HepG2 (cell line): ENCODE measurements at regions of chr2 and their contacts with region 1.

Region 1: DNA sequence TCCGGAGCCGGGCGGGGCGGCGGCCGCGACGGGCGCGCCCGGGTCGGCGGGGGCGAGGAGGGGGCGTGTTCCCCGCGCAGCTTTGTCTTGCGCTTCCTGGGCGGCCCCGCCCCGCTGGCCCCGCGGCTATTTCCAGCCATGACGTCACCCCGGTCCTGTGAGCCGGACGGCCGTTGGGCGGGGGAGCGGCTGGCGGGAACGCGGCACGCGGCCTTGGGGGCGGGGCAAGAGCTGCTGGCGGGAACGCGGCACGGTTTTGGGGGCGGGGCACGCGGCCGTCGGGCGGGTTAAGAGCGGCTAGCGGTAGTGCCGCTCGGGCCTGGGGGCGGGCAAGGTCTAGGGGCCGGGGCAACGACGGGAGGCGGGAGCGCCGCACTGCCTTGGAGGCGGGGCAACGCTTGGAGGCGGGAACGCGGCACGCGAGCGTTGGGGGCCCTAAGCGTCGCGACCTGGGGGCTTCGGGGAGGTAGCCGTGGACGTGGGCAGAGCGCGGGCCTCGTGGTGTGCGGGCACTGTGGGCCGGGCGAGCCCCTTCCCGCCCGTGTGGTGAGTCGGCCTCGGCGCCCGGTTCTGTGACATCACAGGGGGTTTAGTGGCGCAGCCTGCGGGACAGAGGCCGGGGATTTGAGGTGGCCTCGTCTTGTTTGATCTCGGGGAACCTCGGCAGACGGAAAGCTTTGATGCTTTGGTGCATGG is 704 bp downstream of the KLF11 start:
- DNase-seq: peak; percentile 64
- ATAC-seq: peak; percentile 10
- H3K4me3 ChIP-seq: peak overlapping the region in 2 of 3 experiments; percentile 48 to 63; a peak in 4 of 6 replicates
- H3K27ac ChIP-seq: no peak overlapping the region
- H3K4me1 ChIP-seq: peaks cover 52% of the 10 kb centered on the region
- H3K27me3 ChIP-seq: peaks cover 5 to 27% of the 10 kb centered on the region in 2 experiments; a peak in 4 of 5 replicates
- CTCF ChIP-seq: no peak
- EP300 ChIP-seq: no peak; a peak in 1 of 4 replicates
- POLR2A ChIP-seq: no peak
- RAD21 ChIP-seq: peak; percentile 1; the same call in 1 of the 2 replicates

Region 2: DNA sequence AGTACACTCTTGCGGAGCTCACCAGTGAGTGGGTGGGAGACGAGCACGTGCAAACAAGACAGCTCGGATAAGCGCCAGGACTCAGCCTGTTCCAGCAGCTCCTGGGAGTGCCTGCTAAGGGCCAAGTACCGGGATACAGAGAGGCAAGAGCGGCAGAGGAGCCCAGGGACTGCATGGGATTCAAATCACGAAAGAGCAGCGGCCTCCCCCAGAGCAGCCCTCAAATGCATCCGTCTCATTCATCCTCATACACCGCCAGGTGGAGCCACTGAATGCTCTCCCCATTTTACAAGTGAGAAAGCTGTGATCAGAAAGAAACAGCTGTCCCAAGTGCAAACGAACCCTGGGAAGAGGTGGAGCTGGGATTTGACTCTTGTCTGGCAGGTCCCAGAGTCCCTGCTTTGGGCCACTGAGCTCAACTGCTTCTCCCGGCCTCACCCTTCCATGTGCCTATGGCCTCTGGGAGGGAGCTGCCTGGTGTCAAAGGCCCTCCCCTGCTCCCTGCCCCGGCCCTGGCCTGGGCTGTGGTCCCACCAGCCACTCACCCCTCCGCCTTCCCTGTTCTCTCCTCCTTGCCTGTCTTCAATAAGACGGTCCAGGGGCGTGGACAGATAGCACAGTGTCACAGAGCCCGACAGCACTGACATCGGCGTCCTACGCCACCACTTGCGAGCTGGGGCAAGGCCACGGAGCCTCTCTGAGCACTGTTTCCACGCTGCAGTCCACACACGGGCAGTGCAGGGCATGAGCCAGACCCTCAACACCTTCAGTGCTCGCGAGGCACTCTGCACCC is 273.6 kb before region 1 on chr2:
- CTCF ChIA-PET with region 1: interaction called, 3 read pairs
- POLR2A ChIA-PET with region 1: interaction called, 3 read pairs
- in situ Hi-C with region 1: no loop called
- intact Hi-C with region 1: loop called (anchors 1 kb)
- DNase-seq: peak; percentile 76
- ATAC-seq: peak; percentile 63
- H3K4me3 ChIP-seq: peak overlapping the region in 1 of 3 experiments; percentile 20; a peak in 1 of 6 replicates
- H3K27ac ChIP-seq: no peak overlapping the region
- H3K4me1 ChIP-seq: peaks cover 70% of the 10 kb centered on the region
- H3K27me3 ChIP-seq: peaks cover 9 to 71% of the 10 kb centered on the region in 2 experiments
- CTCF ChIP-seq: peak; percentile 82
- EP300 ChIP-seq: no peak
- POLR2A ChIP-seq: no peak
- RAD21 ChIP-seq: no peak; the same call in 1 of the 2 replicates

Region 3: DNA sequence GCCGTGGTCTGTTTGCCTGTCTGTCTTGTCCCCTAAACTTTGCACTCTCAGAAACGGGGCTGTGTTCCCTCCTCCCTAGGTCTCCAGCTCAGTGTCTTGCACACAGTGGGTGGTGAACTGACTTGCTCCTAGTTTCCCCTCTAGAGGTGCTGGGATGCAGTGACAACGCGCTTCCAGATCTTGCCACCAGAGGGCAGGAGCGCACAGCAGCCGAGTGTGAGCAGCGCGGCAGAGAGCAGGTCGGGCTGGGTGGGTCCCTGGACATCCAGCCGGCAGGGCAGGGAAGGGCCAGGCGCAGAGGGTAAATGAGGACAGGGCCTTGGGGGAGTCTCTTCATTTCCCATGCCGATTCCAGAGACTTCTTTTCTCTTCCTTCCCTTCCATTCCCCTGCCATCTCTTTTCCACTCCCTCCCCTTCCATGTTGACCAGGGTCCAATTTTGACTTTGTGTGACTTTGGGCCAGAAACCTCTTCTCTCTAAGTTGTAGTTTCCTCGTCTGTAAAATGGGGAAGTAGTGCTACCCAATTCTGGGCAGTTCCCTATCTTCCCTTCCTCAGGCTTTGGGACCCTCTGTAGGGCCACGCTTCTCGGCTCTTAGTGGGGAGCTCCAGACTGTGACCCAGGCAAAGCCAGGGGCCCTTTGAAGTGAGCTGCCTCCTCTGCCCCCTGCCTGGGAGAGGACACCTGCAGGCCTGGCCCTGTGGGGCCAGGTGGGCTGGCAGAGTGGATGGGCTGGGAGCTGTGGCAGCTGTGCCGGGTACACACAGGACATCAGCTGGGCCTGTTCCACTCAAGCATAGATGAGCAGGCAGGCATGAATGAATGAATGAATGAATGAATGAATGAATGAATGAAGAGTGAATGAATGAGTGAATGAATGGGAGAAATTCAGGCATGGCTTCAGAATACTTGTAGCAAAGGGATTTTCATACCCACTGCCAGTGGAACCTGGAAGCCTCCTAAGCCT is 244.1 kb before region 1 on chr2:
- CTCF ChIA-PET with region 1: interaction called, 14 read pairs
- POLR2A ChIA-PET with region 1: no interaction called
- in situ Hi-C with region 1: loop called (anchors 5 kb)
- intact Hi-C with region 1: loop called (anchors 1 kb)
- DNase-seq: peak; percentile 77
- ATAC-seq: peak; percentile 78
- H3K4me3 ChIP-seq: peak overlapping the region; percentile 32 to 70 (median 42)
- H3K27ac ChIP-seq: no peak overlapping the region
- H3K4me1 ChIP-seq: peaks cover 78% of the 10 kb centered on the region
- H3K27me3 ChIP-seq: peaks cover 5 to 45% of the 10 kb centered on the region in 2 experiments; a peak in 4 of 5 replicates
- CTCF ChIP-seq: peak; percentile 100
- EP300 ChIP-seq: no peak; a peak in 1 of 4 replicates
- POLR2A ChIP-seq: no peak
- RAD21 ChIP-seq: peak; percentile 90

Region 4: GRCh38 chr2:9813312-9814133 is 230.5 kb before region 1 on chr2:
- CTCF ChIA-PET with region 1: interaction called, 18 read pairs
- POLR2A ChIA-PET with region 1: no interaction called
- in situ Hi-C with region 1: no loop called
- intact Hi-C with region 1: loop called (anchors 1 kb)
- DNase-seq: peak; percentile 56
- ATAC-seq: peak; percentile 90
- H3K4me3 ChIP-seq: peak overlapping the region; percentile 11 to 60 (median 32); a peak in 2 of 6 replicates
- H3K27ac ChIP-seq: no peak overlapping the region
- H3K4me1 ChIP-seq: peaks cover 23% of the 10 kb centered on the region; the same call in 1 of the 2 replicates
- H3K27me3 ChIP-seq: peaks cover 8 to 72% of the 10 kb centered on the region in 2 experiments; a peak in 4 of 5 replicates
- CTCF ChIP-seq: peak; percentile 99
- EP300 ChIP-seq: no peak
- POLR2A ChIP-seq: no peak
- RAD21 ChIP-seq: peak; percentile 93

Region 5: GRCh38 chr2:9984217-9984739 is 59.8 kb before region 1 on chr2:
- CTCF ChIA-PET with region 1: interaction called, 25 read pairs
- POLR2A ChIA-PET with region 1: interaction called, 3 read pairs
- in situ Hi-C with region 1: no loop called
- intact Hi-C with region 1: loop called (anchors 1 kb)
- DNase-seq: peak; percentile 38
- ATAC-seq: peak; percentile 87
- H3K4me3 ChIP-seq: no peak overlapping the region
- H3K27ac ChIP-seq: no peak overlapping the region
- H3K4me1 ChIP-seq: no peaks in the 10 kb centered on the region
- H3K27me3 ChIP-seq: no peaks in the 10 kb centered on the region
- CTCF ChIP-seq: peak; percentile 77
- EP300 ChIP-seq: no peak
- POLR2A ChIP-seq: no peak
- RAD21 ChIP-seq: peak; percentile 27; the same call in 1 of the 2 replicates

Region 6: DNA sequence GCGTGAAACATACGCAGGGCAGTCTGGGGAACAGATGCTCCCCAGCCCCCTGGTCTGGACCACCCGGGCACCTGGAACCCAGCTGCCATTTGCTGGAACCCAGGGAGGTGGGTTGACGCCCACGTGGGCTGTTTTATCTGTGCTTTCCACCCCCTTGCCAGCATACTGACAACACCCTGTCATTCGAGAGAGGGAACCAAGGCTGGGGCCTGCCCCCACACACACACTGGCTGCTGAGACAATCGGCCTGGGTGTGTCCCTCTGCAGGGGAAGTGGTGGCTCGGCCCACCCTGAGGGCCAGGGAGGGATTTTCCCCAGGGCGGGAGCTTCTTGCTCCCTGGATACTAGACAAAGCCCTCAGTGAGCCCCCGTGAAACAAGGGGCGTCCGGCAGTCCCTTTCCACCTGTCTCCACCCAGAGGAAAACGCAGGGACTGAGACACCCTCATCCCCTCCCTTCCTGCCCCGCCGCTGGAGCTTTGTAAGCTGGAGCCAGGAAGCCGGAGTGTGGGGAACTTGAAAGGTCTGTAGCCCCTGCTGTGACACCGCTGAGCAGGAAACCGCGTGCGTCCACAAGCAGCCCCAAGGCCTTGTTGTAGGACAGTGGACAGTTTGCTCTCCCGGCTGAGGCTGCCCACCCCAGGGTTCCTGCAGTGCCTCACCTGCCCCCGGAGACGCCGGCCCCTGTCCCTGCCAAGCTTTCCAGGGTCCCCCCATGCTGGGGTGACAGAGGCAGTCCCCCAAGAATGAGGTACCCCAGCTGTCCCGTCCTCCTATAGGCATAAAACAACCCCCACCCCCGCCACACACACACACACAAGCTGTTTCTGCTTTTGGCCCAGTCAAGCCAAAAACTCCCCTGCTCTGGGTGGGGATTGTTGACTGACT is 14.8 kb before region 1 on chr2:
- CTCF ChIA-PET with region 1: interaction called, 3 read pairs
- POLR2A ChIA-PET with region 1: interaction called, 18 read pairs
- in situ Hi-C with region 1: no loop called
- intact Hi-C with region 1: no loop called
- DNase-seq: no peak
- ATAC-seq: peak; percentile 67
- H3K4me3 ChIP-seq: peak overlapping the region in 1 of 3 experiments; percentile 45; a peak in 1 of 6 replicates
- H3K27ac ChIP-seq: no peak overlapping the region
- H3K4me1 ChIP-seq: peaks cover 46% of the 10 kb centered on the region
- H3K27me3 ChIP-seq: peaks cover 2 to 61% of the 10 kb centered on the region in 2 experiments; a peak in 4 of 5 replicates
- CTCF ChIP-seq: 0 out of 2 replicates have a peak, but pooled peaks have one; percentile 3
- EP300 ChIP-seq: no peak
- POLR2A ChIP-seq: no peak
- RAD21 ChIP-seq: no peak; the same call in 1 of the 2 replicates